ENCODE measurements at regions of chr2 and their contacts with region 1.

Region 1: DNA sequence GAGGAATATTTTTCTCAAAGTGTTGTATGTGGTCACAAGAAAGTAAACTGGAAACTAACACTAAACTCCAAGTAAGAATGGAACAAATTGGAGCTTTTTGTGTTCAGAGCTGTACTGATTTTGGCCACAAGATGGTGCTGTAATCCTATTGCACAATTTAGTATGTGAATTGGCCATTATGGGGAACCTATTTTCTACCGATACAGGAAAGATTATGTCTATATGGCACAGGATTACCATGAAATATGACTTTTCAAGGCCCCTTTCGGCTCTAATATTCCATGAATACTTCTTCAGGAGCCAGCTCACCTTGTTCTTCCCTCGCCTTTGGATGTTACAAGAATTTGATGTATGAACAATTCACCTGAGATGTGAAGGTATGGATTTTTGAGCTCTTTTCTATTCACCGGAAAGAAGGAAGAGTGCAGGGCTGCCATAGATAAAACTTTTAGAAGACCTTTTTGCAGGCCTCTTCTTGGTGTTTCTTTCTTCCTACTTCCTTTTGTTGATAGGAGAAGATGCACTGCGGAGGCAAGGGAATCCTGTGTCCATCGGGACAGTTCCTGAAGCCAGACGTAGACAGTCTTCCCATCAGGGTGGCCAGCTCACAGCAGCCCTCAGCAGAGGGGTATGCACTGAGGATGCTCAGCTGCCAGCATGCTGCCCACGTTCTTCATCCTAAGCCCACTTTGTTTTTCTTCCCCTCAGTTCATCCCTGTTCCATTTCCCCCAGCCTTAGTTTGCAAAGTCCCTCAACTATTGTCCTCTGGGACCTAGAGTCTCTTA is 13.3 kb downstream of the MRPL44 start:
- DNase-seq: peak; percentile 68
- ATAC-seq: peak; percentile 79
- H3K4me3 Mint-ChIP-seq: no peak overlapping the region
- H3K27ac Mint-ChIP-seq: no peak overlapping the region
- H3K4me1 Mint-ChIP-seq: peaks cover 10% of the 10 kb centered on the region
- H3K27me3 Mint-ChIP-seq: no peaks in the 10 kb centered on the region
- CTCF ChIP-seq: peak; percentile 88

Region 2: DNA sequence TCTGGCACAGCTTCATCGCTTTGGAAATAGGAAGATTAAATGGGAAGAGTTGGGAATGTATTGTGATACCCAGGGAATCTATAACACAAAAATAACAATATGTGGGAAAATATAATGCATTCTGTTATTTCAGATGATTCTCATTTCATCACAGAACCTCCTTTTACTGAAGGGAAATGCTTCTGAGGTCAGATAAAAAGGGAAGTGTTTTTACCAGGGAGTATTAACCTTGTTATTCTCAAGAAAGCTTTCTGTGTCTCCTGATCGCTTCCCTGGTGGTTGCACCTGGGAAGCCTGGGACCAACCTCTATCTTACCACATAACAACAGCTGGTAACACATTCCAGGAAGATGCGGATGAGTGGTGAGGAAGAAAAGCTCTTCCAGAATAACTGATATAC is 415.6 kb before region 1 on chr2:
- CTCF ChIA-PET with region 1: no interaction called
- POLR2A ChIA-PET with region 1: no interaction called
- intact Hi-C with region 1: no loop called
- DNase-seq: no peak
- ATAC-seq: no peak
- H3K4me3 Mint-ChIP-seq: no peak overlapping the region
- H3K27ac Mint-ChIP-seq: no peak overlapping the region
- H3K4me1 Mint-ChIP-seq: no peaks in the 10 kb centered on the region
- H3K27me3 Mint-ChIP-seq: peaks cover 1% of the 10 kb centered on the region
- CTCF ChIP-seq: no peak

Region 3: DNA sequence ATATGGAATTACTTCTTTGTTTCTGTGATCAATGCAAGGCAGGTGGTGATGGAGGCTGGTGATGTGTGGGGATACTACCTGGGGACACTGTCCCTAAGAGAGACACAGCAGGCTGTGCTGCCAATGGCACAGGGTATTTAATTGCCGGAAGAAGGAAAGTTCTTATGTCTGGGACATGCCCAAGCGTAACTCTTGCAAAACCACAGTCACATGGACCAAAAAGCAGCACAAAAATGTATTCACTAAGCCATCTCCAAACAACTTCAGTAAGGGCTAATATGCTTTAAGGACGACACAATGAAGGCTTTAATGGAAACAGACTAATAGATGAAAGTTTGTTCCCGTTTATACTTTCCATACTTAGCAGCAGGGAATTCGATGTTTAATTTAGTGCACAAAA is 83.4 kb before region 1 on chr2:
- CTCF ChIA-PET with region 1: no interaction called
- POLR2A ChIA-PET with region 1: no interaction called
- intact Hi-C with region 1: no loop called
- DNase-seq: no peak
- ATAC-seq: no peak
- H3K4me3 Mint-ChIP-seq: no peak overlapping the region
- H3K27ac Mint-ChIP-seq: no peak overlapping the region
- H3K4me1 Mint-ChIP-seq: peaks cover 9% of the 10 kb centered on the region
- H3K27me3 Mint-ChIP-seq: no peaks in the 10 kb centered on the region
- CTCF ChIP-seq: no peak

Region 4: DNA sequence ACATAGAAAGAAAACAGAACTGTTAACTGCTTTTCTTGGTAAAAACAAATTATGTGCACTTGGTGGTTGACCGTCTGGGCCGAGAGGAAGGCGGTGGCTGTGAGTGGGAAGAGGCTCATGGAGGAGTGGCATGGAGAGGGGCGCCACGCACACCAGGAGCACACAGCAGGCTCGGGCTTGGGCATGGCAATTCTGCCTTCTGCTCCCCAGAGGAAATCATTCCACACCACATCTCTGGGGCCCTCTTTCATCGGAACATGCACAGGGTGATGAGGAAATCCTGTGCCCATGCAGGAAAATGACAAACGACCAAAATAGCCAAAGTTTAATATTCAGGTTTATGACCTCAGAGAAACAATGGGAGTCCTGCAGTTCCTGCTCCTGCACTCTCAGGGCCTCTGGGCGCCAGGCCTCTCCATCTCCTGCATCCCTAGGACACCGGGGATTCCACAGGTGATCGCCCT is 51.8 kb before region 1 on chr2:
- CTCF ChIA-PET with region 1: no interaction called
- POLR2A ChIA-PET with region 1: no interaction called
- intact Hi-C with region 1: no loop called
- DNase-seq: no peak
- ATAC-seq: no peak
- H3K4me3 Mint-ChIP-seq: no peak overlapping the region
- H3K27ac Mint-ChIP-seq: no peak overlapping the region
- H3K4me1 Mint-ChIP-seq: peaks cover 13% of the 10 kb centered on the region
- H3K27me3 Mint-ChIP-seq: no peaks in the 10 kb centered on the region
- CTCF ChIP-seq: no peak

Region 5: DNA sequence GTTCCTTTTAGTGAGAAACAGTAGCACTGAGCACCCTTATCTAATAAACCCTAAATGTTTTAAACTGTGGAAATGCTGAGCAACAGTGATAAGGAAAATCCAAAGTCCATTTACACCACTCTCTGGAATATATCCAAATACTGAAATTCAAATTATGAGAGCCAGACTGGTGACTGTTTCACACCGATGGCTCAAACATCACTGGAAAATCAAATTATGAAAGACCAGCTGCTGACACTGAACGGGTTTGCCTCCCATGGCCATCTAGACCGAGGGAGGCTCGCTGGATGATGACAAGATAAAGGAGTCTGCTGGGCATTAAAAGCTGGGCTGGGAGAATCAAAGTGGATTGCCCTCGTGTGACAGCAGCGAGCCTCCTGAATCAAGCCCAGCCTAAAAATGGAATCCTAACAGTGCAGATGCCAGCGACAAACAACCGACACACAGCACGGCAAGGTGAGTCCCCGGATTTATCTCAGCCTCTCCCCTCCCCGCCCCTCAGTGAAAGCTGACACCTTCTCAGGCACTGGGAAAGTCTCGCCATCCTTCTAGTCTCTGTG is 38.2 kb after region 1 on chr2:
- CTCF ChIA-PET with region 1: interaction called, 10 read pairs
- POLR2A ChIA-PET with region 1: no interaction called
- intact Hi-C with region 1: no loop called
- DNase-seq: no peak
- ATAC-seq: no peak
- H3K4me3 Mint-ChIP-seq: no peak overlapping the region
- H3K27ac Mint-ChIP-seq: no peak overlapping the region
- H3K4me1 Mint-ChIP-seq: peaks cover 7% of the 10 kb centered on the region
- H3K27me3 Mint-ChIP-seq: no peaks in the 10 kb centered on the region
- CTCF ChIP-seq: no peak

Region 6: GRCh38 chr2:224039124-224039940 is 68.8 kb after region 1 on chr2 and contains the start of gene SERPINE2:
- CTCF ChIA-PET with region 1: interaction called, 10 read pairs
- POLR2A ChIA-PET with region 1: no interaction called
- intact Hi-C with region 1: no loop called
- DNase-seq: peak; percentile 75
- ATAC-seq: peak; percentile 80
- H3K4me3 Mint-ChIP-seq: peak within 1 kb of the TSS; percentile 89
- H3K27ac Mint-ChIP-seq: peak within 1 kb of the TSS; percentile 35
- H3K4me1 Mint-ChIP-seq: peaks cover 17% of the 10 kb centered on the region
- H3K27me3 Mint-ChIP-seq: peaks cover 43% of the 10 kb centered on the region
- CTCF ChIP-seq: no peak
- total RNA-seq, gene SERPINE2: 40.4 to 42.4 TPM

Region 7: GRCh38 chr2:224278531-224278930 is 308.0 kb after region 1 on chr2:
- CTCF ChIA-PET with region 1: interaction called, 242 read pairs
- POLR2A ChIA-PET with region 1: no interaction called
- intact Hi-C with region 1: no loop called
- DNase-seq: no peak
- ATAC-seq: no peak
- H3K4me3 Mint-ChIP-seq: no peak overlapping the region
- H3K27ac Mint-ChIP-seq: no peak overlapping the region
- H3K4me1 Mint-ChIP-seq: no peaks in the 10 kb centered on the region
- H3K27me3 Mint-ChIP-seq: peaks cover 8% of the 10 kb centered on the region
- CTCF ChIP-seq: no peak

Region 8: GRCh38 chr2:224369028-224369632 is 398.6 kb after region 1 on chr2:
- CTCF ChIA-PET with region 1: interaction called, 29 read pairs
- POLR2A ChIA-PET with region 1: no interaction called
- intact Hi-C with region 1: no loop called
- DNase-seq: peak; percentile 26
- ATAC-seq: no peak
- H3K4me3 Mint-ChIP-seq: no peak overlapping the region
- H3K27ac Mint-ChIP-seq: no peak overlapping the region
- H3K4me1 Mint-ChIP-seq: no peaks in the 10 kb centered on the region
- H3K27me3 Mint-ChIP-seq: peaks cover 1% of the 10 kb centered on the region
- CTCF ChIP-seq: peak; percentile 85

Measured in activated CD8-positive, alpha-beta T cell treated with anti-CD3 and anti-CD28 coated beads for 36 hours (primary cell).